Endothelial cell of umbilical vein (primary cell): ENCODE measurements at regions of chr7 and their contacts with region 1.

Region 1: DNA sequence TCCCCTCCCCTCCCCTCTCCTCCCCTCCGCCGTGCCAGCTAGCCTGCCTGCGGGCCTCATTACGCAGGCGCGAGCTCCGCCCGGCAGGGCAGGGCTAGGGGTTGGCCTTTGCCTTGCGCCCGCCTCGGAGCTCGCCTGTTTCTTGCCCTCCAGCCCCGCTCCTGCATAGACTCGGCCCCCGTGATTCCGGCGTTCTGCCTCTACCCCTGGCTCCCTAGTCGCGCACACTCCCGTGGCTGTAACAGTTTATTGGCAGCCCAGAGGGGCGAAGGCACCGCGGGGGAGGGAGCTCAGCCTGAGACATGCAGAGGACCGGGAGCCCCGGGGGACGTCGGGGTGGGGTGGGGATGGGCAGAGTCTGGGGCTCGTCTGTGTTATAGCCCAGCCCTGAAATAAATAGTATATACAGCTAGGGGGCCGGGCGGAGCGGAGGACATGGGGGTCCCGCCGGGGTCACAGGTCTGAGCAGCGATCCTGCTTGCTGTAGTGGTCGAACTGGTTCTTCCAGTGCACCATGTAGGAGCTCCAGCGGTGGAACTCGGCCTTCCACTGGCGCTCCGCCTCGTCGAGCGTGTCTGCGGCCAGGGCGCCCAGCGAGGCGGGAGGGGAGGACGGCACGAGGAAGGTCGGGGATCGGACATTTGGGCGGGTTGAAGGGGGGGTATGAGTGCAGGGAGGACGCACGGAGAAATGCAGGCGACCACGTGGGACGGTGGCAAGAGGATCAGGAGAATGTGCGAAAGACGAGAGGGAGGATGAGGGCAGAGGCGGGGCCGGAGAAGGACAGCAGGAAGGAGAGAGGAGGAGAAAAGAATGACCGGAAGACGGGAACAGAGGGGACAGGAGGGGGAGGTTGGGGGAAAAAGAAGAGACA is 483 bp upstream of the UFSP1 start:
- DNase-seq: peak; percentile 88
- H3K4me3 ChIP-seq: peak overlapping the region; percentile 15 to 38 (median 37)
- H3K27ac ChIP-seq: no peak overlapping the region
- H3K4me1 ChIP-seq: peaks cover 40% of the 10 kb centered on the region
- H3K27me3 ChIP-seq: peaks cover 0 to 2% of the 10 kb centered on the region in 2 experiments
- CTCF ChIP-seq: no peak
- POLR2A ChIP-seq: no peak

Region 2: GRCh38 chr7:100827330-100828227 is 62.4 kb before region 1 on chr7 and contains the start of gene EPHB4:
- CTCF ChIA-PET with region 1: interaction called, 5 read pairs
- POLR2A ChIA-PET with region 1: no interaction called
- dilution Hi-C with region 1: no loop called
- intact Hi-C with region 1: loop called (anchors 1 kb)
- DNase-seq: peak; percentile 88
- H3K4me3 ChIP-seq: peak within 1 kb of the TSS; percentile 88 to 92 (median 90)
- H3K27ac ChIP-seq: peak within 1 kb of the TSS; percentile 94
- H3K4me1 ChIP-seq: peaks cover 23% of the 10 kb centered on the region
- H3K27me3 ChIP-seq: no peaks in the 10 kb centered on the region
- CTCF ChIP-seq: peak; percentile 42 to 62
- POLR2A ChIP-seq: peak; percentile 17
- total RNA-seq, gene EPHB4: 148 and 193 TPM in 2 replicates

Region 3: GRCh38 chr7:100914879-100915447 is 25.0 kb after region 1 on chr7:
- CTCF ChIA-PET with region 1: no interaction called
- POLR2A ChIA-PET with region 1: no interaction called
- dilution Hi-C with region 1: no loop called
- intact Hi-C with region 1: no loop called
- DNase-seq: no peak
- H3K4me3 ChIP-seq: no peak overlapping the region
- H3K27ac ChIP-seq: no peak overlapping the region
- H3K4me1 ChIP-seq: no peaks in the 10 kb centered on the region
- H3K27me3 ChIP-seq: no peaks in the 10 kb centered on the region
- CTCF ChIP-seq: no peak
- POLR2A ChIP-seq: no peak

Region 4: DNA sequence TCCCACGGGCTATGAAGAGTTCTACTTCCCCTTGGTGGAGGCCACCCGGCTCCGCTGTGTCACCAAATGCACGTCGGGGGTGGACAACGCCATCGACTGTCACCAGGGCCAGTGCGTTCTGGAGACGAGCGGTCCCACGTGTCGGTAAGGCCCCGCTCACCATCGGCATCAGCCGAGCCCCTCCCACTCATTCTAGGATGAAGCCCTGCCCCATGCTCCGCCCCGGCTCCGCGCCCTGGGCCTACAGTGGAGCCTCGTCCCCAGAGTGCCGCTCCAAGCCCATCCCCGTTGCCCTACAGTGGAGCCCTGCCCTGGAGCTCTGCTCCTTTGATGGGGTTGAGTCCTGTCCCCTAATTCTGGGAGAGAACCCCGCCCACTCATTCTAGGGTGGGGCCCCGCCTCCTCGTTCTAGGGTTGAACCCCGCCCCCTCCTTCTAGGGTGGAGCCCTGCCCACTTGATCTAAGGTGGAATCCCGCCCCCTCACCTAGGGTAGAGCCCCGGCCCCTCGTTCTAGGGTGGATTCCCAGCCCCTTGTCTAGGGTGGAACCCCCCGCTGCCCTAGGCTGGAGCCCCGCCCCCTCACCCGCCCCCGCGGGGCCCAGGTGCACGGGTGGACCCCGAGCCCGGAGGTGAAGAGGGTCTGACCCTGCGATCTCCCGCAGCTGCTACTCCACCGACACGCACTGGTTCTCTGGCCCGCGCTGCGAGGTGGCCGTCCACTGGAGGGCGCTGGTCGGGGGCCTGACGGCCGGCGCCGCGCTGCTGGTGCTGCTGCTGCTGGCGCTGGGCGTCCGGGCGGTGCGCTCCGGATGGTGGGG is 75.9 kb after region 1 on chr7:
- CTCF ChIA-PET with region 1: no interaction called
- POLR2A ChIA-PET with region 1: no interaction called
- dilution Hi-C with region 1: no loop called
- intact Hi-C with region 1: loop called (anchors 5 kb)
- DNase-seq: peak; percentile 49
- H3K4me3 ChIP-seq: no peak overlapping the region
- H3K27ac ChIP-seq: no peak overlapping the region
- H3K4me1 ChIP-seq: peaks cover 2% of the 10 kb centered on the region
- H3K27me3 ChIP-seq: peaks cover 22 to 28% of the 10 kb centered on the region in 2 experiments
- CTCF ChIP-seq: peak; percentile 92 to 93
- POLR2A ChIP-seq: no peak

Region 5: DNA sequence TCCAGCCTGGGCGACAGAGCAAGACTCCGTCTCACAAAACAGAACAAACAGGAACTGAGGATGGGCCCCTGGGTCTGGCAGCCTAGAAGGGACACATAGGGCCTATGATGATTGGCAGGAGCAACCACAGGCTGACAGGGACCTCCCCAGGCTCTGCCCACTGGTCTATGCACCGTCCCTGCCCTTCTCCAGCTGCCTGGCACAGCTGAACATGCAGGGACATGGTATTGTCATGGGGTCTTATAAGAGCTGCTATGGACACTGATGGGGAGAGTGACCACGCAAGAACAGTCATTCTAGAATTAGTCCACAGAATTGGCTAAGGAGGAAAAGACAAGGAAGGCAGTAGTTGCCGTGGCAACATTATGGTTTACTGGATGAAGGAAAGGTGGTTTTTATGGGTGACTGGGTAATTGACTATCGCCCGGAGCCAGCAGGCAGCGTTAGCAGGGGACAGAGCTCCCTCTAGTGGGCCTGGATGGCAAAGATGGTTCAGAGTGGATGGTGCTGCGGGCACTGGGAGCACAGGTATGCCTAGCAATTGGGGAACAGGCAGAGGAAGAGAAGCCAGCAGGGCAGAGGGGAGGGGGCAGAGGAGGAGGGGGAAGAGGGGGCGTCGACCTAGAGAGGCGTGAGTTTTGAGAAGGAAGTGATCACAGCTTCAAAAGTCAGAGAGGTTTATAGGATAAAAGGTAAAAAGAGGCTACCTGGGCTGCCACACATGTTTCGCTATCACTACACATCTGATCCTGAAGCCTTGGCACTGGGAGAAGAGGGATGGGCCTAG is 187.5 kb after region 1 on chr7:
- CTCF ChIA-PET with region 1: interaction called, 13 read pairs
- POLR2A ChIA-PET with region 1: no interaction called
- dilution Hi-C with region 1: no loop called
- intact Hi-C with region 1: loop called (anchors 1 kb)
- DNase-seq: peak; percentile 70
- H3K4me3 ChIP-seq: no peak overlapping the region
- H3K27ac ChIP-seq: no peak overlapping the region
- H3K4me1 ChIP-seq: no peaks in the 10 kb centered on the region
- H3K27me3 ChIP-seq: peaks cover under 1 to 4% of the 10 kb centered on the region in 2 experiments
- CTCF ChIP-seq: peak; percentile 88 to 94
- POLR2A ChIP-seq: no peak

Region 6: DNA sequence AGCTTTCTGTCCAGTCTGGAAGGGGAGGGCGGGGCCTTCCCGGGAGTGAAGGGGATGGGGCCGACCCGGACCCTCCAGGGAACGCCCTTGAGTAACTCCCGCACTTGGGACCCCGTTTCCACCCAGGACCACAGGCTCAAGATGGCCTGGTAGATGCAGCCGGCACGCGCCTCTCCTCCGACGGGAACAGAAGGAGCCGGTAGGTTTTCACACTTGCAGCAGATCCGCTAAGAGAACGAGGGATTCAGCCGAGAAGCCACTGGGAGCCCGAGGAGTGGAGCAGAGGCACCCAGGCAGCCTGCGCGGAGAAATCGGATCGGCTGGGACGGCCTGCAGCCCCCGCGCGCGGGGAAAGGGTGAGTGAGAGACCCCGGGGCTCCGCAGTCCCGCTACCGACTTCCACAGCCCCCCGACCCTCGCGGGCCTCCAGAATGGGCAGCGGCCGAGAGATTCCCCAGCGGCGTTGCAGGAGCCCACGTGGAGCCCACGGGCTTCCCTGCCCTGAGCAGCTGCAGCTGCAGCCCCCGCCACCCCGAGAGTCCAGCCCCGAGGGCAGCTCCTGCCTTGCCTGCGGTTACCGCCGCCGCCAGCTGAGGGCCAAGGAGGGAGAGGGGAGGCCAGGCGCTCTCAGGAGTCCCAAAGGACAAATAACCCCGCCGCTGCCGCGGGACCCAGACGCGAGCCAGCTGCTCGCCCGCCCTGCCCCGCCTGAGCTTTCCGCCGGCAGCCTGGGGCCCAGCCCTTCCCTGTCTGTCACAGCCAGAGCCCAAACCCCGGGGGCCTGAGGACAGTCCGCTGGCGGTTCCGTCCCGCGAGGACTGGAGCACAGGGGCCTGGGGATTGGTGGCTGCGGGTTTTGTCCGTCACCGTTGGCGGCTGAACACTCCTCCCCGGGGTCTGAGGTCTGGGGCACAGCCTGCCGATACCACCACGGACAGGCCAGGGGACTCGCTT is 409.8 kb after region 1 on chr7:
- CTCF ChIA-PET with region 1: no interaction called
- POLR2A ChIA-PET with region 1: interaction called, 6 read pairs
- dilution Hi-C with region 1: no loop called
- intact Hi-C with region 1: loop called (anchors 10 kb)
- DNase-seq: no peak
- H3K4me3 ChIP-seq: no peak overlapping the region
- H3K27ac ChIP-seq: no peak overlapping the region
- H3K4me1 ChIP-seq: peaks cover 2% of the 10 kb centered on the region
- H3K27me3 ChIP-seq: peaks cover 51 to 65% of the 10 kb centered on the region in 2 experiments
- CTCF ChIP-seq: no peak
- POLR2A ChIP-seq: no peak